ENCODE measurements at regions of chr7 and their contacts with region 1.

Region 1: GRCh38 chr7:115078386-115078785 is 156.5 kb downstream of the MDFIC start:
- DNase-seq: no peak
- H3K4me3 ChIP-seq: no peak overlapping the region
- H3K27ac ChIP-seq: no peak overlapping the region
- H3K4me1 ChIP-seq: no peaks in the 10 kb centered on the region
- H3K27me3 ChIP-seq: no peaks in the 10 kb centered on the region
- CTCF ChIP-seq: no peak
- POLR2A ChIP-seq: no peak

Region 2: DNA sequence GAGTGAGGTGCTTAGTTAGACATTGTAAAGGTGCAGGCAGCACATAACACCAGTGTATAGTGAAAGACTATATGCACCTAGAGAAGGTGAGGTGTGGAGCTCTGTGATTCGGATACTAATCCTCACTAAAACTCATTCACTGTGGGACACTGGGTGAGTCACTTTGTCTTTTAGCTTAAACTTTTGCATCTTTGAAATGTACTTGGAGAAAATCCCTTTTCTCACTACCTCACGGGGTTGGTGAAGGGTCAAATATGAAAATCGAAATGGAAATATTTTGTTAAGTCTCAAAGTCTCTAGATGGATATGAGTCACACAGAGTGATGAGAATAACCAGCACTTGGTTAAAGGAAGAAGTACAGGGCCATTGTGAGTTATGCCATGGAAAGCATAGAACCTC is 118.5 kb before region 1 on chr7:
- intact Hi-C with region 1: no loop called
- DNase-seq: no peak
- H3K4me3 ChIP-seq: no peak overlapping the region
- H3K27ac ChIP-seq: no peak overlapping the region
- H3K4me1 ChIP-seq: no peaks in the 10 kb centered on the region
- H3K27me3 ChIP-seq: no peaks in the 10 kb centered on the region
- CTCF ChIP-seq: no peak
- POLR2A ChIP-seq: no peak

Region 3: DNA sequence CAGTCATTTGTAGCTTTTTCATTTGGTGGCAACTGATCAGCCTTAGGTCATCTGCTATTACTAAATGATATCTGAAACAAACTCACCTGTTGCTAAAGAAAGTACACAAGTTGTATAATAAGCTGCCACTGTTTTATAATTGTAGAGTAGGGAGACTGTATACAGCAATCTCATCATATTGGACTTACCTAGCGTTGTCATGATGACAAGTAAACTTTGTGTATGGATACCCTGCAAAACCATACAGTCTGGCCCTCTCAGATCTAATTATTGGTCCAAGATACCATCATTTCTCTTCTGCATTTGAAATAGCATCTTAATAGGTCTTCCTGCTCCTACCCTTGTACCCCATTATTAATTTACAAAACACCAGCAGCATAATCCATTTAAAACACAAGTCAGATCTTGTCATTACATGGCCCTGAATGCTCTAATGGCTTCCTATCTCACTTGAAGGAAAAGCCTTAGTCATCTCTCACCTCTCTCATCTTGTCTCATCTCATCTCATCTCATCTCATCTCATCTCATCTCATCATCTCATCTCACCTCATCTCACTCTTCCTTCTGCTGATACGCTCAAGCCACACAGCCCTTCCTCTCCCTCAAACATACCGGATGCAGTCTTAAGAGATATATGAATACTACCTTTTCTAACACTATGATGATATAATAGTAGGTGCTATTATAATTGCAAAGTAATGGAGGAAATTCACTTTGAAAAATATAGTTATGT is 384.1 kb after region 1 on chr7:
- intact Hi-C with region 1: loop called (anchors 5 kb)
- DNase-seq: no peak
- H3K4me3 ChIP-seq: no peak overlapping the region
- H3K27ac ChIP-seq: no peak overlapping the region
- H3K4me1 ChIP-seq: no peaks in the 10 kb centered on the region
- H3K27me3 ChIP-seq: no peaks in the 10 kb centered on the region
- CTCF ChIP-seq: no peak
- POLR2A ChIP-seq: no peak

Measured in breast epithelium (tissue), 4 donors.